MCF 10A (cell line): ENCODE measurements at regions of chr3 and their contacts with region 1.

Region 1: GRCh38 chr3:43690400-43691119 is at the start of gene ABHD5:
- DNase-seq: peak; percentile 93
- H3K4me3 Mint-ChIP-seq: peak within 1 kb of the TSS; percentile 90
- H3K27ac Mint-ChIP-seq: peak within 1 kb of the TSS; percentile 88
- H3K4me1 Mint-ChIP-seq: peaks cover 41% of the 10 kb centered on the region
- H3K27me3 Mint-ChIP-seq: no peaks in the 10 kb centered on the region
- CTCF ChIP-seq: peak; percentile 17
- total RNA-seq, gene ABHD5: 30.3 and 32.6 TPM in 2 replicates

Region 2: GRCh38 chr3:43707998-43708397 is 17.4 kb after region 1 on chr3:
- CTCF ChIA-PET with region 1: interaction called, 17 read pairs
- POLR2A ChIA-PET with region 1: interaction called, 320 read pairs
- intact Hi-C with region 1: loop called (anchors 1 kb)
- DNase-seq: peak; percentile 95
- H3K4me3 Mint-ChIP-seq: peak overlapping the region; percentile 55
- H3K27ac Mint-ChIP-seq: peak overlapping the region; percentile 81
- H3K4me1 Mint-ChIP-seq: peaks cover 22% of the 10 kb centered on the region
- H3K27me3 Mint-ChIP-seq: no peaks in the 10 kb centered on the region
- CTCF ChIP-seq: no peak

Region 3: GRCh38 chr3:43727930-43728329 is 37.4 kb after region 1 on chr3:
- CTCF ChIA-PET with region 1: interaction called, 3 read pairs
- POLR2A ChIA-PET with region 1: interaction called, 19 read pairs
- intact Hi-C with region 1: no loop called
- DNase-seq: no peak
- H3K4me3 Mint-ChIP-seq: no peak overlapping the region
- H3K27ac Mint-ChIP-seq: no peak overlapping the region
- H3K4me1 Mint-ChIP-seq: peaks cover 13% of the 10 kb centered on the region
- H3K27me3 Mint-ChIP-seq: no peaks in the 10 kb centered on the region
- CTCF ChIP-seq: no peak

Region 4: GRCh38 chr3:43855674-43856299 is 165.2 kb after region 1 on chr3:
- CTCF ChIA-PET with region 1: no interaction called
- POLR2A ChIA-PET with region 1: interaction called, 3 read pairs
- intact Hi-C with region 1: loop called (anchors 10 kb)
- DNase-seq: peak; percentile 83
- H3K4me3 Mint-ChIP-seq: no peak overlapping the region
- H3K27ac Mint-ChIP-seq: no peak overlapping the region
- H3K4me1 Mint-ChIP-seq: peaks cover 22% of the 10 kb centered on the region
- H3K27me3 Mint-ChIP-seq: peaks cover 11% of the 10 kb centered on the region
- CTCF ChIP-seq: peak; percentile 43